Activated CD4-positive, alpha-beta T cell treated with anti-CD3 and anti-CD28 coated beads for 36 hours (primary cell): ENCODE measurements at regions of chr20 and their contacts with region 1.

Region 1: GRCh38 chr20:40990542-40991120 is 38.0 kb upstream of the TOP1 start:
- DNase-seq: peak; percentile 85
- ATAC-seq: peak; percentile 98
- H3K4me3 Mint-ChIP-seq: no peak overlapping the region
- H3K27ac Mint-ChIP-seq: peak overlapping the region; percentile 78
- H3K4me1 Mint-ChIP-seq: peaks cover 28% of the 10 kb centered on the region
- H3K27me3 Mint-ChIP-seq: no peaks in the 10 kb centered on the region

Region 2: DNA sequence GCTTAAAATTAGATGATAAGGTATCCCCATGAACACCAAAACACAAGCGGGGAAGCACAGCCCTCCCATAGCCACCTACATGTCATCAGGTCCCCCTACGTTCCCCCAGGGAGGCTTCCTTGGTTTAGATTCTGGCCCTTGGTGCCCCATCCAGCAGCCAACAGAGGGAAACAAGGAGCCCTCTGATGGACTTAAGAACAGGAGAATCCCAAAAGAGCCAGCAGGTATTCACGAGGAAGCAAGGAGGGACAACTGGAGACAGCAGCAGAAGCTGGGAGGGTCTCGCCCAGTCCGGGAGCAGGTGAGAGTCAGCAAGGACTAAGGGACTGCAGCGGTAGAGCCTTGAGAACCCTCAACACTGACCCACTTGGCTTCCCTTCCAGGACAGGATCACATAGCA is 20.4 kb before region 1 on chr20:
- CTCF ChIA-PET with region 1: interaction called, 24 read pairs
- POLR2A ChIA-PET with region 1: no interaction called
- intact Hi-C with region 1: no loop called
- DNase-seq: no peak
- ATAC-seq: no peak
- H3K4me3 Mint-ChIP-seq: no peak overlapping the region
- H3K27ac Mint-ChIP-seq: no peak overlapping the region
- H3K4me1 Mint-ChIP-seq: peaks cover 9% of the 10 kb centered on the region
- H3K27me3 Mint-ChIP-seq: peaks cover 6% of the 10 kb centered on the region

Region 3: DNA sequence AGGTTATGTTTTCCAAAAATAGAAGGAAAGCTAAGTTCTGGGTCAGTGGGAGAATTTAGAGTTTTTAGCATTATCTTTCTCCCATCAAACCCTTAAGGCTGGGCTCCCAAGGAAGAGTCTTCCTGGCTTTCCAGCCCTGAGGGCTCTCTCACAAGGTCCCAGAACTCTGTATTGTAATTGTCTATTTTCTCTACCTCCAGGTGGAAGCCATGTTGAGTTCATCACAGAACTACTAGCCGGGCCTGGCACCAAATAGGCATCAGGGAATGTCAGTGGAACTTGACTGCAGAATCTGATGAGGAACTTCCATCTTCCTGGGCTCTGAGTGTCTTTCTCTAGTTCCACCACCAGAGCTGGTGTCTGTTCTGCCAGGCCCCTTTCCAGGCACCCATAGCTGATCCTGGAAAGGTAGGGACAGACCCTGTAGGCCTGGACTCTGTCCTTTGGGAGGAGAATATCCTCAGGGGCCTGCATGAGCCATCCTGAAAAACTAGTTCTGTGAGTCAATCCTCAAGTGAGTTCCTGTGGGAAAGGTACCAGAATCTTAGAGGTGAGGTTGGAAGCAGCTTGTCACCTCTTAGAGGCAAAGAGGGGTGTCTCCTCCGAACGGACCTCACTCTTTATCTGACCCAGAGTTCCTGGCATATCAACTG is 26.9 kb after region 1 on chr20:
- CTCF ChIA-PET with region 1: interaction called, 16 read pairs
- POLR2A ChIA-PET with region 1: no interaction called
- intact Hi-C with region 1: no loop called
- DNase-seq: no peak
- ATAC-seq: no peak
- H3K4me3 Mint-ChIP-seq: no peak overlapping the region
- H3K27ac Mint-ChIP-seq: no peak overlapping the region
- H3K4me1 Mint-ChIP-seq: peaks cover 4% of the 10 kb centered on the region
- H3K27me3 Mint-ChIP-seq: no peaks in the 10 kb centered on the region

Region 4: DNA sequence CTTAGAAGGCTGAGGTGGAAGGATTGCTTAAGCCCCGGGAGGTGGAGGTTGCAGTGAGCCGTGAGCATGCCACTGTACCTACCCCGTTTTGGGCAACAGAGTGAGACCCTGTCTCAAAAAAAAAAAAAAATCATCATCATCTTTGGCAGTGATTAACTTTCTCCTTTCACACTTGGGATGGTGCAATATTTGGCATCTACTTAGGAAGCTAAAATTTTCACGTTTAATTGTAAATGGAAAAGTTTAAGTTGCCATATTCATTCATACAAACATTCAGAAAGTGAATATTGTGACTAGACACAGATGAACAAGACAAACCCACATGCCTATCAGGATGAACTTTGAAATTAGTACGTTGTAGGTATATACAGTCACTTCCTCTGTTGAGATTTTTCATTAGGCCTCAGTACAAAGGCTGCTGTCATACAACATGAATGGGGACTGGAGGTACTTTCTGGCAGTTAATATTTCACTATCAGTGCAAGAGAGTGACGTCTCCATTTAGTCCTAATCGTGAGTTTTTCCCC is 48.3 kb after region 1 on chr20:
- CTCF ChIA-PET with region 1: interaction called, 11 read pairs
- POLR2A ChIA-PET with region 1: no interaction called
- intact Hi-C with region 1: no loop called
- DNase-seq: no peak
- ATAC-seq: peak; percentile 96
- H3K4me3 Mint-ChIP-seq: no peak overlapping the region
- H3K27ac Mint-ChIP-seq: peak overlapping the region; percentile 79
- H3K4me1 Mint-ChIP-seq: peaks cover 86% of the 10 kb centered on the region
- H3K27me3 Mint-ChIP-seq: no peaks in the 10 kb centered on the region

Region 5: DNA sequence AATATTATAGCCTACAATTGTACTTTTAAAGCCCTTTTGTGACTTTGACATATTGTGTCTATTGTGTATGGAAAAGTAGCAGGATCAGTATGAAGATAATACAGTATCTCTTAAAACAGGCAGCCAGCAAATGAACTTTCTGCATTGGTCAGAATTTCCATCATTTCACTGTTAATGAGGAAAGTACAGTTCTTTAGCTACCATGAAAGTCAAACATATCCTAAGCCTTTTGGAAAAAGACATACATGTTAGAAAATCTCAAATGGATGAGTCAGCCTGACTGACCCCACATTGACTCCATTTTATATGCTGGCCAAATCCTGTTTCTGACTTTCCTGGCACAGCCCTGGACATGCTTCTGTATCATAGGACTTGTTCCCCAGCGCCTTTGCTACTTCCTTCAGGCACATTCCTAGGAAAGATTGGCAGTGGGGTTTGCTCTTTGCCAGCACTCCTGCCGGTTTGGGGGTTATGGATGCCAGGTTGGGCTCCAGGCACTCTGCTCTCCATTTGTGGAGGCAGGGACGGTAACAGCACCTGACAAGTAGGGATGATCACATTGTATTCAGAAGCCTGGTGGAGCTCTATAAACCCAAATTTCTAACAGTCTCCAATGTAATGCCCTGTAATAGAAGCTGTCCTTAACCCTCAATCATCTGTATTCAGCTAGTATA is 81.7 kb after region 1 on chr20:
- CTCF ChIA-PET with region 1: interaction called, 11 read pairs
- POLR2A ChIA-PET with region 1: no interaction called
- intact Hi-C with region 1: loop called in 1 of 2 experiments (anchors 5 kb)
- DNase-seq: no peak
- ATAC-seq: peak; percentile 31
- H3K4me3 Mint-ChIP-seq: no peak overlapping the region
- H3K27ac Mint-ChIP-seq: peak overlapping the region; percentile 70
- H3K4me1 Mint-ChIP-seq: peaks cover 79% of the 10 kb centered on the region
- H3K27me3 Mint-ChIP-seq: no peaks in the 10 kb centered on the region